Activated CD4-positive, alpha-beta memory T cell treated with anti-CD3 and anti-CD28 coated beads, Interleukin-2, amount 10 ng/mL, durations not matched to agents 7 days and 5 days (primary cell): ENCODE measurements at regions of chr15 and their contacts with region 1.

Region 1: GRCh38 chr15:65304389-65305144 is at the start of gene RNU5B-1:
- DNase-seq: peak; percentile 86
- H3K4me3 Mint-ChIP-seq: peak within 1 kb of the TSS; percentile 94
- H3K27ac Mint-ChIP-seq: peak within 1 kb of the TSS; percentile 90
- H3K4me1 Mint-ChIP-seq: peaks cover 37% of the 10 kb centered on the region
- H3K27me3 Mint-ChIP-seq: peaks cover 2% of the 10 kb centered on the region
- total RNA-seq, gene RNU5B-1: 12.9 TPM in 1 of 2 experiments, not detected in the other

Region 2: DNA sequence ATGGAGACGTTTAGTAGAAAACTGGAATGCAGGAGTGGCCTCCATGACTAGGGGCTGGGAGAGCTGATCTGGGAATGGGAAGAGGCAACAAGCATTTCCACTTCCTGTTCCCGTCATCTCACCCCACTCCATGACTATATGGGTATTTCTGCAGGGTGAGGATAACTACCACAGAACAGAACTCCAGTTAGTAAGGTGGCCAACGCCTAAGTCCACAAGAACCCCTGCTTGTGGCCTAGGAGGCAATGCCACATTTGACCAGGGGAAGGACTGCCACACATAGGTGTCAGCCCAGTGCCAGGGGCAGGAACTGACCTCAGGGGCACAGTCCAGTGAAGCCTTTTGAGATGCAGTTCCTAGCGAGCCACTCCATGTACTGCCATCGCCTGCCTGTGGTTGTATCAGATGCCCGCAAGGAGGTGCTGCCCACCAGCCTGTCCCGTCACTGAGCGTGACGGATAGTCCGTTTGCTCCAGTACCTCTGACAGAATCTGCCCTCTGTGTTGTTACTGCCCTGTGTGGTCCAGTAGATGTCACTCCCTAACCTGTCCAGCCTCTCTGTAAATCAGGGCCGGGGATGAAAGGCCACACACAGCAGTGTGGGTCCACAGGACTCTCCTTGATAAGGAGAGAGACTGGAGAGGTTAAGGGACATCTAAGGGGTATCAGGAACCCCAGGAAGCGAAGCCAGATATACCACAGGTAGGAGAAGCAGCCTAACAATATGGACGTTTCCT is 271.6 kb before region 1 on chr15:
- CTCF ChIA-PET with region 1: interaction called, 6 read pairs
- POLR2A ChIA-PET with region 1: interaction called, 10 read pairs
- DNase-seq: peak; percentile 46
- H3K4me3 Mint-ChIP-seq: no peak overlapping the region
- H3K27ac Mint-ChIP-seq: no peak overlapping the region
- H3K4me1 Mint-ChIP-seq: peaks cover 15% of the 10 kb centered on the region
- H3K27me3 Mint-ChIP-seq: peaks cover 18% of the 10 kb centered on the region

Region 3: GRCh38 chr15:65223996-65224395 is 80.6 kb before region 1 on chr15:
- CTCF ChIA-PET with region 1: no interaction called
- POLR2A ChIA-PET with region 1: no interaction called
- DNase-seq: no peak
- H3K4me3 Mint-ChIP-seq: no peak overlapping the region
- H3K27ac Mint-ChIP-seq: no peak overlapping the region
- H3K4me1 Mint-ChIP-seq: no peaks in the 10 kb centered on the region
- H3K27me3 Mint-ChIP-seq: no peaks in the 10 kb centered on the region

Region 4: DNA sequence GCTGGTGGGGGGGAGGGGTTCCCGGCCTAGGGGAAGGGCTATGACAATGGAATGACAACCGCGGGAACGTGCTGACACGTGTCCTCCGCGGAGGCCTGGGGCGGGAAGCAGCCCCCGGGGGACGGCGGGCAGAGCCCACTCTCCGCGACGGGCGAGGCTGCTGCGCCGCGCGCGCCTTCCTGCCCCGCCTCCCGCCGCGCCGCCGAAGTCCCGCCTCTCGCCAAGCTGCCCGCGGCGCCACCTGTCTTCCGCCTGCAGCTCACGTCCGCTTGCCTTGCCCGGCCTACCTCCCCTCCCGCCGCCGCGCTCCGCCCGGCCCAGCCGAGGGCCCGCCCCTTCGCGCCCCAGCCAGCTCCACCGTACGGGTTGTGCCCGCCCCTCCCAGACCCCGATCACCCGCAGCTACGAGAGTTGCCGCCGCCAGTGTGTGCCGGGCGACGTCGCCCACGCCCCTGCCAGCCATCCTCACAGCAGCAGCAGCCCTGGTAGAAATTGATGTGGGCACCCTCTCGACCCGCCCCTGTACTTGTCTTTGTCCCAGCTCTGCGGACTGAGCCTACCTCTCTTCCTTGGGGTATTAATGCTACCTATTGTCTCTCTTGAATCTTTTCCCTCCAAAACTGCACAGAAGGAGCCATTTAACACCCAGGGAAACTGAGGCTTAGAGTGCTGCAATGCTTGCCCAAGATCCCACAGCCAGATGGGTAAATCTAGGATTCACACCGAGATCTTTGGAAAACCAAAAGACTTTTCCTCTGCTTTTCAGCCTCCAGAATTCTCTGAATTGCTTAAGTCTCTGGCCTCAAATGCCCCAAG is 17.7 kb before region 1 on chr15 and contains the start of gene PARP16:
- CTCF ChIA-PET with region 1: interaction called, 15 read pairs
- POLR2A ChIA-PET with region 1: interaction called, 166 read pairs
- DNase-seq: peak; percentile 94
- H3K4me3 Mint-ChIP-seq: peak within 1 kb of the TSS; percentile 81
- H3K27ac Mint-ChIP-seq: peak within 1 kb of the TSS; percentile 78
- H3K4me1 Mint-ChIP-seq: peaks cover 35% of the 10 kb centered on the region
- H3K27me3 Mint-ChIP-seq: no peaks in the 10 kb centered on the region
- total RNA-seq, gene PARP16: 14.9 to 15.7 TPM

Region 5: GRCh38 chr15:65333148-65333820 is 28.7 kb after region 1 on chr15:
- CTCF ChIA-PET with region 1: no interaction called
- POLR2A ChIA-PET with region 1: no interaction called
- DNase-seq: no peak
- H3K4me3 Mint-ChIP-seq: no peak overlapping the region
- H3K27ac Mint-ChIP-seq: no peak overlapping the region
- H3K4me1 Mint-ChIP-seq: no peaks in the 10 kb centered on the region
- H3K27me3 Mint-ChIP-seq: no peaks in the 10 kb centered on the region

Region 6: GRCh38 chr15:65377104-65377975 is 72.8 kb after region 1 on chr15:
- CTCF ChIA-PET with region 1: no interaction called
- POLR2A ChIA-PET with region 1: interaction called, 15 read pairs
- DNase-seq: no peak
- H3K4me3 Mint-ChIP-seq: peak overlapping the region; percentile 8
- H3K27ac Mint-ChIP-seq: no peak overlapping the region
- H3K4me1 Mint-ChIP-seq: peaks cover 15% of the 10 kb centered on the region
- H3K27me3 Mint-ChIP-seq: peaks cover 72% of the 10 kb centered on the region

Region 7: GRCh38 chr15:65530314-65531122 is 226.0 kb after region 1 on chr15 and contains the start of gene HACD3:
- CTCF ChIA-PET with region 1: no interaction called
- POLR2A ChIA-PET with region 1: interaction called, 12 read pairs
- DNase-seq: peak; percentile 89
- H3K4me3 Mint-ChIP-seq: peak within 1 kb of the TSS; percentile 81
- H3K27ac Mint-ChIP-seq: peak within 1 kb of the TSS; percentile 74
- H3K4me1 Mint-ChIP-seq: peaks cover 35% of the 10 kb centered on the region
- H3K27me3 Mint-ChIP-seq: no peaks in the 10 kb centered on the region
- total RNA-seq, gene HACD3: 26.8 to 29.2 TPM